Left cardiac atrium (tissue), 4 donors: ENCODE measurements at regions of chr13 and their contacts with region 1.

Region 1: GRCh38 chr13:98842864-98843481 is 90.5 kb upstream of the SLC15A1 start:
- DNase-seq: peak; percentile 52
- ATAC-seq: peak; percentile 78 to 83

Region 2: DNA sequence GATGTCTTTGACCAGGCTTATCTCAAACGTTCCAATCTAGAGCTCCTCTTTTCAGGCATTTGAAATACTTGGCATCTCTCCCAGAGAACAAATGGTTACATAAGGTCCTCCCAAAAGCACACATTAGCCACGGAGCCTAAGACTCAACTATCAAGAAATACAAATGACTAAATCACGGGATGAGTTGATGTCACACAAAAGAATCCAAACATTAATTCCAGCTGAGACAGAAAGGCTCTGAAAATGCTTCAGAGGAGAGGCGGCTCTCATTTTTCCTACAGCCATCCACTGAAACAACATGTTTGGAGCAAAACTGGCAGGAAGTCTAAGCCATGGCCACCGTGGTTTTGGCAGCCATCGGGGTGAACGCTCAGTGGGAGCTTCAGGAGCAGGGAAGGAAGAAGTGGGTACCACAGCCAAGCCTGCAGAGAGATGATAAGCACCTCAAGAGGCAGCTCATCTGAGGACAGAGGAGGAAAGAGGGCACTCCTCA is 388.5 kb before region 1 on chr13:
- intact Hi-C with region 1: loop called in 1 of 2 experiments (anchors 10 kb)
- DNase-seq: no peak
- ATAC-seq: peak; percentile 54 to 64

Region 3: DNA sequence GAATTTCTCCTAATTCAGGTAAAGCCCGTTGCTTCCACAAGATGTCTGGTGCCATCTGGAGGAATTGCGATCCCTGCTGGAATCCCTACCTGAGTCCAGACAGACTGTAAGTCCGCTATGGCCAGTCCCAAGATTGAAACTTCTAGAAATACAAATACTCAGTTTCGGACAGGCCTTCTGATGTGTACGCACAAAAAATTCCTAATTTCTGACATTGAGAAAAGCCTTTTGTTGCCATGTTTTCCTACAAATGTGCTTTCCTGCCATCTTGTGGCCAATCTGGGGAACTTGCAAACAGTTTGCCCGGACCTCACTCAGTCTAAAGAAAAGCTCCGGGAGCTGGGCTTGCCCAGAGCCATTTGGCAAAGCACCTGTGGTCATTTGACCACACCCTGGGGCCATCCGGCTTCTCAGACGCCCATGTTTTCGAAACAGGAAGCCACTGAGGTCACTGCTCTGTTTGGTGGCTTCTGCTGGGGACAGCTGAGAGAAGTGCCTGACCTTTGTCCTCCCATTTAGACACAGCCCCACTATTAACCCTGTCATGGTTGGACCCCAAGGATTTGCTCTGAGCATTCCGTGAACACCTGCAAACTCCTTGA is 169.9 kb before region 1 on chr13:
- intact Hi-C with region 1: loop called in 1 of 2 experiments (anchors 10 kb)
- DNase-seq: peak; percentile 73
- ATAC-seq: peak; percentile 88 to 91

Region 4: DNA sequence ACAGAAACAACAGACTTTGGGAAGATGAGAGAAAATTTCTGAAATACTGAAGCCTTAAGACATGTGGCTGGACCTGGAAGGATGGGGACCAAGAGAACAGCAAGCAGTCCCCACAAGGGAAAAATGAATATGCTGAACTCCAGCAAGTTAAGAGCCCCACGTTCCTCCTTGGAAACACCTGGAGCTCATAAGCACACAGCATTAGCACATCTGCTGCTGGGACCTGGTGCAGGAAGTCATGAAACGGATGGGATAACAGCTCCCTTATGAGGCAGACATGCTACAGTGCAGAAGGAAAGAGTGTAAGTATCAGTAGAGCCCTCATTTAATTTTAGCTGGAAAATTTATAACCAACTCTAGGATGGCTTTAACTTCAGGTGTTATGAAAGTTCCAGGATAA is 157.8 kb before region 1 on chr13:
- intact Hi-C with region 1: no loop called
- DNase-seq: no peak
- ATAC-seq: no peak

Region 5: DNA sequence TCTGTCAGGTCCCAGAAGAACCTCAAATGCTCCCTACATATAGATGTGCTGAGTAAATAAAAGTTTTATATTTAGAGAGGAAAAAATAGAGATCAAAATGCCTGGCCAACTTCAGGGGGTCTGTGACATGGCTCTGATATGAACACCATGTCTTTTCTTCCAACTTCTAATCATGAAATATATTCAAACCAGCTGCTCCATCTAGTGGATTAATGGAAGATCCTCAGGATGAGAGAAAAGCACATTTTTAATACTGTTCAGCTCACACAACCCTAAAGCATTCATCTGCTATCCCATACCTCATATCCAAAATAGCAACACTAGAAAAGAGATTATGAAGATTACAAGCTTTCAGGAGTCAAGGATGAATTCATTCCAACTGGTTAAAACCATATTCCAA is 190.8 kb after region 1 on chr13:
- intact Hi-C with region 1: loop called in 1 of 2 experiments (anchors 5 kb)
- DNase-seq: no peak
- ATAC-seq: peak; percentile 70 to 73